ENCODE measurements at regions of chr11 and their contacts with region 1.

Region 1: DNA sequence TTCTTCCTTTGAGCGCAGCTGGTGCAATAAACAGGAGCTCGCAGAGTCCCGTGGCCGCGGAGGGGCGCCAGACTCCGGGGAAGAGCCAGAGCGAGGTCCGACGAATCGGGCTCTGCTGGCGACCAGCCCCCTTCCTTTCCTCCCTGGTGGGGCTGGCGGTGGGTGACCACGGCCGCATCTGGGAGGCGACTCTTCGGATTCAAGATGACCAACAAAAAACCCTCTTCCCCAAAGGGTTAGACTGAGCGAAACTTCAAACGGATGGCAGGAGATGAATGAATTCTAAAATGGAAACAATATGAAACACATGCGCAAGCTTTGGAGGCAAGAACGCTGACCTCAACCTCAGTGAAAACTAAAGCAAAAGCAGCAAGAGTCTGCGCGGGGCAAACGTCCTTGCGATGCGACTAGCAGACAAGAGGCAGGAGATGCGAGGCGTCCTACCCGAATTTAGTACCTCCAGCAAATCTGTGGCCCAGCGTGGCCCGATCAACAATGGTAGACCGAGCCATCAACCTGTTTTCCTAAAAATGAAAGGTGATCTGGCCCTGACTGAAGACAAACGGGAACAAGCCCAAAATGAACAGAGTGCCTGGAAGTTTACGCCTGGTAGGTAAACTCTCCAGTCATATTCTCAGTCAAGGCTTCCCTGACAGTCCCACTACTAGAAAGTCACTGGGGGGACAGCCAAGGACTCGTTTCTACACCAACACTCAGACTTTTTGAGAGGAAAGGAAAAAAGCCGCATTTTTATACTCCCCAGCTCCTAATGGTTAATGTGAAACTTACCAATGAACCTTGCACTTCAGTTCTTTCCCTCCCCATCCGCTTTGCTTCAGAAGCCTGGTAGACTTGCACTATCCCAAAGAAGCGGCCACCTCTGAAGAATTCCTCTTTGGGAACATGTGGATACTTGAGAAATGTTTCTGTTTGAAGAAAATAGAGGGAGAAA is 11.6 kb downstream of the MMP3 start:
- DNase-seq: no peak
- H3K4me3 ChIP-seq: peak overlapping the region; percentile 43
- H3K27me3 ChIP-seq: no peaks in the 10 kb centered on the region
- CTCF ChIP-seq: peak; percentile 83

Region 2: GRCh38 chr11:102420547-102420946 is 411.2 kb before region 1 on chr11:
- CTCF ChIA-PET with region 1: no interaction called
- POLR2A ChIA-PET with region 1: no interaction called
- DNase-seq: no peak
- H3K4me3 ChIP-seq: no peak overlapping the region
- H3K27me3 ChIP-seq: no peaks in the 10 kb centered on the region
- CTCF ChIP-seq: no peak

Region 3: GRCh38 chr11:102776454-102776853 is 55.3 kb before region 1 on chr11:
- CTCF ChIA-PET with region 1: no interaction called
- POLR2A ChIA-PET with region 1: no interaction called
- DNase-seq: no peak
- H3K4me3 ChIP-seq: no peak overlapping the region
- H3K27me3 ChIP-seq: no peaks in the 10 kb centered on the region; the same call in none of the 2 replicates
- CTCF ChIP-seq: no peak

Region 4: DNA sequence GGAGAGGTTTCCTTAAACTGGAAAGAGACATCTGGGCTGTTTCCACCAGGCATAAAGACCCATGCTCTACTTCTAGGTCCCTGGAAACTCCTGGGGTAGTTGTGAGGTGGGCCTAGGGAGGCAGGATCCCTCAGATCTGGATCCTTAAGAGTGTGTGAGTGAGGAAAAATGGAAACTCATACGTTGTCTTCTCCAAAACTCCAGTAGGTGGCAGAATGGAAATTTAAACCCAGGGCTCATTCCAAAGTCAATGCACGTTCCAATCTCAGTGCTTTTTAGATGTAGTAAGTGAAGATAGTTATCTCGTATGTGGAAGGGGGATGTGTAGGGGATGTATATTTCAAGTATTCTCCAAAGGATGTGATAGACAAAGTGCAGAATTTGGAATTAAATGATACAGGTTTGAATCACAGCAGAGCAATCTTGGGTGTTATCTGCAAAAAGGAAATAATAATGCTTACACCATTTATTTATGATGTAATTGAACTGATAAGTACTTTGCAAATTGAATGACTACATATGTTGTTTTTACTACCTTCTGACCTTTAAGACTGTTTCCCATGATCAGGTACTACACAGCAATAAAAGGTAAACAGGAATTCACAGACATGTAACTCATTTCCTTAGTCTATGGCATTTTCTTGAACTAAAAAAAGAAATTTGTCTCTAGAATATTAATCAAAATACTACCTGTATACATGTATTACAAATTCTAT is 20.7 kb before region 1 on chr11:
- CTCF ChIA-PET with region 1: interaction called, 22 read pairs
- POLR2A ChIA-PET with region 1: no interaction called
- DNase-seq: no peak
- H3K4me3 ChIP-seq: no peak overlapping the region
- H3K27me3 ChIP-seq: no peaks in the 10 kb centered on the region
- CTCF ChIP-seq: peak; percentile 70

Region 5: DNA sequence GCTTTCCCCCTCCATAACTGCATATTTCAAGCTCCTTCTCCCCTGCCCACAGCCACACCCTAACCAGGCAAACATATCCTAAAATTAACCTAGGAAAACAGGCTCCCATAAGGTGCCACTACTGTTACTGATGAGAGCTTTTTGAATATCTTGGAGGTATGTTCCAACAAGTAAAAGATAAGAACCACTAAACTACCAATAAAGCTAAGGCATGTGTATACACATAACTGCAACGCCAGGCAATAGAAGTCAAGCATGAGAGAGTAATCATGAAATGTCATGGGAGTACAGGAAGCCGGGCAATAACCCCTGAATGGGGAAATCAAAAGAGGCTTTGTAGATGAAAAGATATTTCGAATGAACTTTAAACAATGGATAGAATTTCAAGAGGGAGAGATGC is 114.5 kb after region 1 on chr11:
- CTCF ChIA-PET with region 1: interaction called, 65 read pairs
- POLR2A ChIA-PET with region 1: no interaction called
- DNase-seq: no peak
- H3K4me3 ChIP-seq: no peak overlapping the region
- H3K27me3 ChIP-seq: no peaks in the 10 kb centered on the region
- CTCF ChIP-seq: no peak

Region 6: GRCh38 chr11:102971766-102972165 is 140.0 kb after region 1 on chr11:
- CTCF ChIA-PET with region 1: no interaction called
- POLR2A ChIA-PET with region 1: no interaction called
- DNase-seq: peak; percentile 89
- H3K4me3 ChIP-seq: no peak overlapping the region
- H3K27me3 ChIP-seq: no peaks in the 10 kb centered on the region
- CTCF ChIP-seq: 0 out of 2 replicates have a peak, but pooled peaks have one; percentile 11

Region 7: DNA sequence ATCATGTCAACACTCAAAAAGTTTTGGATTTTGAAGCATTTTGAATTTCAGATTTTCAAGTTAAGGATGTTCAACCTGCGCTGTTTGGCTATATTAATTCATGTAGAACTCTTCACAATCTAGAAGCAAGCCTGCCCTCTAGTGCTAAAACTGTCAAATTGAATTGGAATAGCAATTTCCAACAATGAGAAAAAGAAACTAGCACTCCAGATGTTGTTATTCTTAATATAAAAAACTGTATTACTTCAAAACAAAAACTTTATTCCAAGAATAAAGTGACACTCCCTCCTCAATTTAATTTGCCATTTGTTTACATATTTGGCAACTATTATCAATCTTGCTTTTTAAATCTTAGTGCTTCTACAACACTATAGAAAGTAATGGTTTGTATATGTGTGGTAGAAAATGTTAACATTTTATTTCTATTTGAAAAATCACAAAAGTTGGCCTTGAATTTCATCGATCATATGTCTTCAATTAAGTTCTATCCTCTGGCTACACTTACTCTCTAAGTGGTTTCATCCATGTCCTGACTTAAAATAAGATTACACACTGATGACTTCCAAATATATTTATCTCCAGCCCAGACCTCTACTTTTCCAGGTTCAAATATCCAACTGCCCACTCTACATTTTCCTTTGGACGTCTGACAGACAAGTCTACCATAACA is 223.6 kb after region 1 on chr11:
- CTCF ChIA-PET with region 1: interaction called, 13 read pairs
- POLR2A ChIA-PET with region 1: no interaction called
- DNase-seq: no peak
- H3K4me3 ChIP-seq: no peak overlapping the region
- H3K27me3 ChIP-seq: no peaks in the 10 kb centered on the region
- CTCF ChIP-seq: peak; percentile 64